ENCODE measurements at regions of chr20 and their contacts with region 1.

Region 1: GRCh38 chr20:63537525-63538203 is 488 bp upstream of the PTK6 start:
- DNase-seq: peak; percentile 98
- ATAC-seq: peak; percentile 97
- H3K4me3 Mint-ChIP-seq: peak overlapping the region; percentile 68
- H3K27ac Mint-ChIP-seq: peak overlapping the region; percentile 85
- H3K4me1 Mint-ChIP-seq: peaks cover 8% of the 10 kb centered on the region
- H3K27me3 Mint-ChIP-seq: no peaks in the 10 kb centered on the region

Region 2: GRCh38 chr20:62688855-62689460 is 848.7 kb before region 1 on chr20:
- CTCF ChIA-PET with region 1: no interaction called
- POLR2A ChIA-PET with region 1: no interaction called
- intact Hi-C with region 1: no loop called
- DNase-seq: no peak
- ATAC-seq: no peak
- H3K4me3 Mint-ChIP-seq: no peak overlapping the region
- H3K27ac Mint-ChIP-seq: no peak overlapping the region
- H3K4me1 Mint-ChIP-seq: peaks cover 8% of the 10 kb centered on the region
- H3K27me3 Mint-ChIP-seq: peaks cover 2% of the 10 kb centered on the region

Region 3: DNA sequence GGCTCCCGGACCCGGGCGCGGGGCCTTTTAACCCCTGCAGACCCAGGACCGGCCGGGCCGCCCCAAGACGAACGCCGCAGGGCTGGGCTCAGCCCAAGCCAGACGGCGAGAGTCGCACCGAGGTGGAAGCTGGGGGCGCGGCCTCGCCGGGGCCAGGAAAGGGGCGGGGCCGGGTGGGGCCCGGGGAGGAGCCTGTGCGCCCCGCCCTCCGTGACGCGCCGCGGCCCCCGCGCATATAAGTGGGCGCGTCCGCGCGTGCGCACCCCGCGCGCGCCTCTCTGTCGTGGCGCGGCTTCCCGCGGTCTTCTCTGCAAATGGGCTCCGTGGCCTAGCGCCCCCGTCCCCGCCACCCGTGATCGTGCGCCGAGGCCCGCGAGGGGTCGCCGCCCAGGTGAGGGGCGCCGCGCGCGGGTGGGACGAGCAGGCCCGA is 17.1 kb before region 1 on chr20 and contains the start of gene PPDPF:
- CTCF ChIA-PET with region 1: interaction called, 21 read pairs
- POLR2A ChIA-PET with region 1: interaction called, 4 read pairs
- intact Hi-C with region 1: loop called in 1 of 2 experiments (anchors 1 kb)
- DNase-seq: peak; percentile 93
- ATAC-seq: peak; percentile 80
- H3K4me3 Mint-ChIP-seq: peak within 1 kb of the TSS; percentile 77
- H3K27ac Mint-ChIP-seq: peak within 1 kb of the TSS; percentile 78
- H3K4me1 Mint-ChIP-seq: peaks cover 10% of the 10 kb centered on the region
- H3K27me3 Mint-ChIP-seq: no peaks in the 10 kb centered on the region
- total RNA-seq, gene PPDPF: 119 to 133 TPM

Region 4: GRCh38 chr20:63635431-63636141 is 97.9 kb after region 1 on chr20:
- CTCF ChIA-PET with region 1: no interaction called
- POLR2A ChIA-PET with region 1: no interaction called
- intact Hi-C with region 1: loop called in 1 of 2 experiments (anchors 5 kb)
- DNase-seq: peak; percentile 88
- ATAC-seq: peak; percentile 77
- H3K4me3 Mint-ChIP-seq: peak overlapping the region; percentile 35
- H3K27ac Mint-ChIP-seq: peak overlapping the region; percentile 84
- H3K4me1 Mint-ChIP-seq: peaks cover 69% of the 10 kb centered on the region
- H3K27me3 Mint-ChIP-seq: no peaks in the 10 kb centered on the region

Region 5: GRCh38 chr20:63707549-63708300 is 170.1 kb after region 1 on chr20 and contains the starts of genes ARFRP1 and ZGPAT:
- CTCF ChIA-PET with region 1: interaction called, 3 read pairs
- POLR2A ChIA-PET with region 1: no interaction called
- intact Hi-C with region 1: loop called in 1 of 2 experiments (anchors 1 kb)
- DNase-seq: peak; percentile 94
- ATAC-seq: peak; percentile 89
- H3K4me3 Mint-ChIP-seq: peak within 1 kb of the TSS; percentile 95
- H3K27ac Mint-ChIP-seq: peak within 1 kb of the TSS; percentile 90
- H3K4me1 Mint-ChIP-seq: peaks cover 44% of the 10 kb centered on the region
- H3K27me3 Mint-ChIP-seq: no peaks in the 10 kb centered on the region
- total RNA-seq, gene ARFRP1: 36.4 to 52.0 TPM
- total RNA-seq, gene ZGPAT: 15.3 to 21.9 TPM

Region 6: GRCh38 chr20:63955827-63956663 is 418.4 kb after region 1 on chr20 and contains the start of gene UCKL1:
- CTCF ChIA-PET with region 1: interaction called, 3 read pairs
- POLR2A ChIA-PET with region 1: no interaction called
- intact Hi-C with region 1: loop called (anchors 5 kb)
- DNase-seq: peak; percentile 95
- ATAC-seq: peak; percentile 78
- H3K4me3 Mint-ChIP-seq: peak within 1 kb of the TSS; percentile 77
- H3K27ac Mint-ChIP-seq: peak within 1 kb of the TSS; percentile 89
- H3K4me1 Mint-ChIP-seq: peaks cover 37% of the 10 kb centered on the region
- H3K27me3 Mint-ChIP-seq: no peaks in the 10 kb centered on the region
- total RNA-seq, gene UCKL1: 28.3 to 32.2 TPM

Region 7: DNA sequence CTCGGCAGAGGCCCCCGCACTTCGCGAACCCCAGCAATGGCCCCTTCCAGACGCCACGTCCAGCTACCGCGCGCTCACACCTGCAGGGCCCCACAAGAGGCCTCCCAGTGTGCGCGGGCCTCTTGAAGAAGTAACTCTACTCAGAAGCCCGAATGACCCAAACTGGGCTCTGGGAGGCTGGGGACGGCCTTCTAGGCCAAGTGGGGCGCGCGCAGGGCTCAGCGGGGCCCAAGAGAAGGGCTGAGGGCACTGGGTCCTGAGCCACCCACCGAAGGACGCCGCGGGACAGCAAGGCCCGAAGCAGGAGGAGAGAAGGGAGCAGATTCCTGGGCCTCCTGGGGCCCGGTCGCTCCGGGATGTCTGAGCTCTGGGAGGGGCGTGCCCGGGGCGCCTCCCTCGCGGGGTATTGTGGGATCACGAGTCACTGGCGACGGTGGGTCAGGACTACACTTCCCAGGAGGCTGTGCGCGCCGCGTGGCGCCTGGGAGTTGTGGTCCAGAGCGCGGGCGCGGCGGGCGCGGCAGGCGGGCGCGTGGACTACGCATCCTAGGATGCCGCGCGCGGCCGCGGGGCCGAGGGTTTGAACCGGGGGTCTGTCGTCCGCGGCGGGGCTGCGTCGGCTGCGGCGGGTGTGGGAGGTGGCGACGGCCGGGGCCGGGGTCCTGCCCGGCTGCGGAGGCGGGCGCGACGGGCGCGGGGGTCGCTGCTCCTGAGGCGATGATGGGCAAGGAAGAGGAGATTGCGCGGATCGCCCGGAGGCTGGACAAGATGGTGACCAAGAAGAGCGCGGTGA is 525.1 kb after region 1 on chr20 and contains the start of gene TCEA2:
- CTCF ChIA-PET with region 1: no interaction called
- POLR2A ChIA-PET with region 1: no interaction called
- intact Hi-C with region 1: loop called (anchors 2 to 10 kb)
- DNase-seq: peak; percentile 98
- ATAC-seq: peak; percentile 83
- H3K4me3 Mint-ChIP-seq: peak within 1 kb of the TSS; percentile 82
- H3K27ac Mint-ChIP-seq: peak within 1 kb of the TSS; percentile 79
- H3K4me1 Mint-ChIP-seq: peaks cover 51% of the 10 kb centered on the region
- H3K27me3 Mint-ChIP-seq: no peaks in the 10 kb centered on the region
- total RNA-seq, gene TCEA2: 40.6 to 50.0 TPM

Measured in activated CD4-positive, alpha-beta T cell treated with anti-CD3 and anti-CD28 coated beads for 36 hours (primary cell).